ENCODE measurements at regions of chr12 and their contacts with region 1.

Region 1: GRCh38 chr12:106682592-106683234 is 91.8 kb upstream of the RIC8B start:
- DNase-seq: no peak
- ATAC-seq: peak in 2 of 4 donors; percentile 33 to 44
- H3K4me3 ChIP-seq: no peak overlapping the region
- H3K27ac ChIP-seq: no peak overlapping the region
- H3K4me1 ChIP-seq: no peaks in the 10 kb centered on the region
- H3K27me3 ChIP-seq: no peaks in the 10 kb centered on the region
- CTCF ChIP-seq: peak in 9 of 12 donors; percentile 4 to 42 (median 26)
- POLR2A ChIP-seq: no peak

Region 2: DNA sequence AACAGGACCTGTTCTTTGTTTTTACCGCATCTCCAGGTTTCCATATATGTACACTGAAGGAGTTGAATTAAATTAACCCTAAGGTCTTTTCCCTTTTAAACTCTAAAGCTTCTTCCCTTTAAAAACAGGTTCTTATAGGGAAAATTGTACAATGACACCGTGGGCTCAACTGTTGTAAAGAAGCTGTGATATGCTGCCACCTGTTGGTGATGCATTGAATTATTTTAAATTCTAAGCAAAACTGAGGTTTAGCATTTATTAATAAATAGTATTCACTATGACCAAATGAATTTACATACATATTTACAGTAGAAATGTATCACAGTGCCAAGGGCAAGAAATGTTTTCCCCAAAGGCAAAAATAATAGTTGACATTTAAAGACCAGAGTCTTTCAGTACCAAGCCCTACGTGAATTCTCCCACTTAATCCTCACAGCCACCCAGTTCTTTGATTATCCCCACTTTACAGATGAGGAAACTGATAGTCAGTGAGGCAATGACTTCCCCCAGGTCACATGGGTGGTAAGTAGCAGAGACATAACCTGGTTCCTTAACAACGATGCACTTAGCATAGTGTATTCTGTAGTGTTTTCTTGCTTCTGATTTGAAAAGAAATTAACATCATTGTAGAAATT is 237.3 kb after region 1 on chr12:
- intact Hi-C with region 1: loop called in 2 of 10 experiments (anchors 5 to 10 kb)
- DNase-seq: no peak
- ATAC-seq: no peak
- H3K4me3 ChIP-seq: no peak overlapping the region
- H3K27ac ChIP-seq: no peak overlapping the region
- H3K4me1 ChIP-seq: peaks cover 0 to 6% (median 0%) of the 10 kb centered on the region in 12 donors
- H3K27me3 ChIP-seq: peaks cover 0 to 84% (median 0%) of the 10 kb centered on the region in 9 donors
- CTCF ChIP-seq: peak; percentile 68 to 91 (median 83)
- POLR2A ChIP-seq: no peak